ENCODE measurements at regions of chr1 and their contacts with region 1.

Region 1: GRCh38 chr1:40338745-40339424 is 21.8 kb upstream of the COL9A2 start:
- DNase-seq: peak; percentile 86 to 89 (median 87)
- H3K4me3 ChIP-seq: no peak overlapping the region
- H3K4me3 Mint-ChIP-seq: peak overlapping the region; percentile 0 to 62 (median 50)
- H3K27ac ChIP-seq: no peak overlapping the region
- H3K27ac Mint-ChIP-seq: peak overlapping the region in 6 of 7 donors; percentile 1 to 94 (median 58)
- H3K4me1 ChIP-seq: peaks cover 31% of the 10 kb centered on the region
- H3K4me1 Mint-ChIP-seq: peaks cover 20 to 42% (median 31%) of the 10 kb centered on the region in 4 donors
- H3K27me3 ChIP-seq: no peaks in the 10 kb centered on the region
- H3K27me3 Mint-ChIP-seq: no peaks in the 10 kb centered on the region

Region 2: DNA sequence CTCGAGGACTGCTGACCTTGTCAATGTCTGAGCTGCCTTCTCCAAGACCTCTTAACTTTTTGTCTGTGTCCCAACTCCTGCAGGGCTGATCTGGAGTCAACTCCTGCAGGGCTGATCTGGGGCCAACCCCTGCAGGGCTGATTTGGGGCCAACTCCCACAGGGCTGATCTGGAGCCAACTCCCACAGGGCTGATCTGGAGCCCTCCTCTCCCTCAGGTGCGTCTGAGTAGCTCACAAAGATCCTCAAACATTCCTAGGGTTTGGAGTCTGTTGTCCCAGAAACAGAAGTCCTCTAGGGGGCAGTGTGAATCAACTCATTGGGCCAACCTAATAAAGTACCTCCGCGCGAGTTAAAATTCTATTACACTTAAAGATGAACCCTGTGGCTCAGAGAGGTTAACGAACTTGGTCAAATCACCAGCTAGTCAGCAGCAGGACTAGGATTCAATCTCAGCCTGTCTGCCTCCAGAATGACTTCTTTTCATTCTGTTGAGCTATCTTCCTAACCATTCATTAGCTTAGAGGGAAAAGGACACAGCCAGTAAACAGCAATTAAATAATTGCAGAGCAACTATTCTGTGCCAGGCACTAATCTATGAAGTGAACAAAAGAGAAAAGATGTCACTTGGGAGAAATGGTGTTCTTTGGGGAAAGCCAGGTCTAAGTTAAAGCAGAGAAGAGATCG is 194.9 kb before region 1 on chr1:
- CTCF ChIA-PET with region 1: interaction called, 116 read pairs
- POLR2A ChIA-PET with region 1: no interaction called
- intact Hi-C with region 1: loop called (anchors 1 kb)
- DNase-seq: peak; percentile 60 to 65 (median 65)
- H3K4me3 ChIP-seq: no peak overlapping the region
- H3K4me3 Mint-ChIP-seq: no peak overlapping the region
- H3K27ac ChIP-seq: no peak overlapping the region
- H3K27ac Mint-ChIP-seq: peak overlapping the region in 1 of 7 donors; percentile 12
- H3K4me1 ChIP-seq: no peaks in the 10 kb centered on the region
- H3K4me1 Mint-ChIP-seq: peaks cover 0 to 7% (median 3%) of the 10 kb centered on the region in 4 donors
- H3K27me3 ChIP-seq: no peaks in the 10 kb centered on the region
- H3K27me3 Mint-ChIP-seq: peaks cover 13 to 30% of the 10 kb centered on the region in 2 donors

Region 3: GRCh38 chr1:40241362-40241761 is 97.5 kb before region 1 on chr1:
- CTCF ChIA-PET with region 1: interaction called, 14 read pairs
- POLR2A ChIA-PET with region 1: no interaction called
- intact Hi-C with region 1: no loop called
- DNase-seq: no peak
- H3K4me3 ChIP-seq: no peak overlapping the region
- H3K4me3 Mint-ChIP-seq: peak overlapping the region in 6 of 8 donors; percentile 8 to 52 (median 26)
- H3K27ac ChIP-seq: no peak overlapping the region
- H3K27ac Mint-ChIP-seq: peak overlapping the region; percentile 34 to 90 (median 65)
- H3K4me1 ChIP-seq: peaks cover 16% of the 10 kb centered on the region
- H3K4me1 Mint-ChIP-seq: peaks cover 12 to 32% (median 16%) of the 10 kb centered on the region in 4 donors
- H3K27me3 ChIP-seq: no peaks in the 10 kb centered on the region
- H3K27me3 Mint-ChIP-seq: no peaks in the 10 kb centered on the region

Region 4: GRCh38 chr1:40315239-40315794 is 23.6 kb before region 1 on chr1:
- CTCF ChIA-PET with region 1: interaction called, 62 read pairs
- POLR2A ChIA-PET with region 1: interaction called, 11 read pairs
- intact Hi-C with region 1: loop called (anchors 1 kb)
- DNase-seq: peak; percentile 84 to 86 (median 85)
- H3K4me3 ChIP-seq: peak overlapping the region; percentile 65 to 74
- H3K4me3 Mint-ChIP-seq: peak overlapping the region; percentile 79 to 95 (median 87)
- H3K27ac ChIP-seq: no peak overlapping the region
- H3K27ac Mint-ChIP-seq: peak overlapping the region in 6 of 7 donors; percentile 15 to 72 (median 46)
- H3K4me1 ChIP-seq: peaks cover 44% of the 10 kb centered on the region
- H3K4me1 Mint-ChIP-seq: peaks cover 14 to 67% (median 35%) of the 10 kb centered on the region in 4 donors
- H3K27me3 ChIP-seq: no peaks in the 10 kb centered on the region
- H3K27me3 Mint-ChIP-seq: peaks cover 10 to 18% of the 10 kb centered on the region in 2 donors

Region 5: GRCh38 chr1:40385437-40386358 is 46.8 kb after region 1 on chr1:
- CTCF ChIA-PET with region 1: interaction called, 35 read pairs
- POLR2A ChIA-PET with region 1: interaction called, 12 read pairs
- intact Hi-C with region 1: loop called (anchors 5 kb)
- DNase-seq: peak; percentile 90 to 95 (median 93)
- H3K4me3 ChIP-seq: peak overlapping the region; percentile 45 to 67
- H3K4me3 Mint-ChIP-seq: peak overlapping the region; percentile 78 to 94 (median 87)
- H3K27ac ChIP-seq: peak overlapping the region; percentile 99
- H3K27ac Mint-ChIP-seq: peak overlapping the region; percentile 95 to 100 (median 99)
- H3K4me1 ChIP-seq: peaks cover 97% of the 10 kb centered on the region
- H3K4me1 Mint-ChIP-seq: peaks cover 75 to 95% (median 85%) of the 10 kb centered on the region in 4 donors
- H3K27me3 ChIP-seq: no peaks in the 10 kb centered on the region
- H3K27me3 Mint-ChIP-seq: no peaks in the 10 kb centered on the region

Region 6: DNA sequence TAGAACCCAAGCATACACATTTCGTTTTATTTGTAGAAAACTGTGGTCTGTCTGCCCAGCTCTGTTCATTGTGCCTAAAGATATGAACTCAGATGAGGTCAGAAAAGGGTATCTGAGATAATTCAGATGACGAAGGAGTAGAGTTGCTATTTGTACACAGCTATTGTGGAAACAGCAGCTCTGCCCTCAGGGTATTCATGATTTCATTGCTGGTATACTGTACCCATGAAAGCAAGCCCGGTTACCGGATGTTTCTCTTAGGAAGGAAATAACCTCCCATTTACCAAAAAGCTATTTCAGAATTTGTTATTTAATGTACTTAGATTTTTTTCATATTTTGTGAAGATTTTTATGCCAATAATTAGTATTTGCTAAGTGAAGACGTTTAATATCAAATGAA is 72.4 kb after region 1 on chr1:
- CTCF ChIA-PET with region 1: interaction called, 87 read pairs
- POLR2A ChIA-PET with region 1: no interaction called
- intact Hi-C with region 1: no loop called
- DNase-seq: no peak
- H3K4me3 ChIP-seq: no peak overlapping the region
- H3K4me3 Mint-ChIP-seq: no peak overlapping the region
- H3K27ac ChIP-seq: no peak overlapping the region
- H3K27ac Mint-ChIP-seq: peak overlapping the region in 2 of 7 donors; percentile 46
- H3K4me1 ChIP-seq: no peaks in the 10 kb centered on the region
- H3K4me1 Mint-ChIP-seq: peaks cover 13 to 48% (median 27%) of the 10 kb centered on the region in 4 donors
- H3K27me3 ChIP-seq: no peaks in the 10 kb centered on the region
- H3K27me3 Mint-ChIP-seq: no peaks in the 10 kb centered on the region

Region 7: DNA sequence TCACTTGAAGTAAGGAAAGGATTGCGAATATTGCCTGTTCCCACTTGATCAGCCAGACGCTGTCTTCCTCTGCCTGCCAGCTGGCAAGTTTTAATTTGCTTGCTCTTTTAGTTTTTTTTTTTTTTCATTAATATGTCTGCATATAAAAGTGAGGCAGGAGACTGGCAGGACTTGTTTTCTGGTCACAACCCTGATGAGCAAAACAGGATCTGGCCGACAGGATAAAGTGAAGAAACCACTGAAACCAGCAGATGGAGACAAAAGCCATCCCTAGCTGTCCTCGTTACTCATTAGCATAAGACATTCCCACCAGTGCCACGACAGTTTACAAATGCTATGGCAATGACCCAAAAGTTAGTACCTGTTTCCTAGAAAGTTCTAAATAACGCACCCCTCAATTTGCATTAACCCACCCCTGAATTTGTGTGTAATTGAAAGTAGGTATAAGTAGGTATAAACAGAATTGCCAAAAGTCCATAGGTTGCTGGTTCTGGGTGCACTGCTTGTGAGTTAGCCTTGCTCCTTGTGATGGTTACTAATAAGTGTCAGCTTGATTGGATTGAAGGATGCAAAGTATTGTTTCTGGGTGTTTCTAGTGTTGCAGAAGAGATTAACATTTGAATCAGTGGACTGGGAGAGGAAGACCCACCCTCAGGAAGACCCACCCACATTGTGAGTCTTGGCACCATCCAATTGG is 253.4 kb after region 1 on chr1:
- CTCF ChIA-PET with region 1: no interaction called
- POLR2A ChIA-PET with region 1: no interaction called
- intact Hi-C with region 1: no loop called
- DNase-seq: peak in 2 of 5 donors; percentile 8 to 19
- H3K4me3 ChIP-seq: no peak overlapping the region
- H3K4me3 Mint-ChIP-seq: no peak overlapping the region
- H3K27ac ChIP-seq: no peak overlapping the region
- H3K27ac Mint-ChIP-seq: no peak overlapping the region
- H3K4me1 ChIP-seq: no peaks in the 10 kb centered on the region
- H3K4me1 Mint-ChIP-seq: peaks cover 0 to 6% (median 4%) of the 10 kb centered on the region in 4 donors
- H3K27me3 ChIP-seq: no peaks in the 10 kb centered on the region
- H3K27me3 Mint-ChIP-seq: peaks cover 4 to 11% of the 10 kb centered on the region in 2 donors